ENCODE measurements at regions of chr10 and their contacts with region 1.

Region 1: DNA sequence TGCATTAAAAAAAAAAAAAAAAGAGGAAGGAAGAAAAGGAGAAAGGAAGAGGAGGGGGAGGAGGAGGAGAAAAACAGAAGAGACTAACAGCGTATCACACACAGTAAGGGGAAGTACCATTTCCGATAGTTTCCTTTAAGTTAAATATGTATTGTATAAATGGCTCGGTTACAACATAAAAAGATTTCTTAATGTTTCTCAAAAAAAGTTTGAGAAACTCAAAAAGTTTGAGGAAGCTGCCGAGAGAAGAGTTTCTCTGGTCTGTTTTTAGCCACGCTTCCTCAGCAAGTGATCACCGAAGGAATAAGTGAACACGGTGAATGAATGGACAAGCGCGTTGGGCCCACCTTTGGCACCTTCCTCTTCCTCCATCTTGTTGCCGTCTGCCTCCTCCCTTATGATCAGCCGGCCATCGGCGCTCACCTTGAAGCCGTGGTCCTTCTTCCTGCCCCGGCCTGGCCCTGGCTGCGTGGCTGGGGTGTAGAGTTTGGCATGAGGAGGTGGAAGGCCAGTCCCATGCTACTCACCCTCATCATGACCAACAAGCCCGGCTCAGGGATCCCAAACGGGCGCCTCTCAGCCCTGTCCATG is 31.3 kb upstream of the FRAT2 start:
- DNase-seq: peak; percentile 88 to 99 (median 95)
- H3K4me3 ChIP-seq: peak overlapping the region in 1 of 3 experiments; percentile 38
- H3K4me3 Mint-ChIP-seq: peak overlapping the region; percentile 30 to 54
- H3K27ac ChIP-seq: peak overlapping the region; percentile 91 to 100
- H3K27ac Mint-ChIP-seq: peak overlapping the region; percentile 96 to 99 (median 98)
- H3K4me1 ChIP-seq: peaks cover 96 to 100% of the 10 kb centered on the region in 2 donors
- H3K4me1 Mint-ChIP-seq: peaks cover 98% of the 10 kb centered on the region
- H3K27me3 ChIP-seq: no peaks in the 10 kb centered on the region
- H3K27me3 Mint-ChIP-seq: peaks cover under 1 to 3% (median 1%) of the 10 kb centered on the region in 3 donors
- CTCF ChIP-seq: no peak

Region 2: DNA sequence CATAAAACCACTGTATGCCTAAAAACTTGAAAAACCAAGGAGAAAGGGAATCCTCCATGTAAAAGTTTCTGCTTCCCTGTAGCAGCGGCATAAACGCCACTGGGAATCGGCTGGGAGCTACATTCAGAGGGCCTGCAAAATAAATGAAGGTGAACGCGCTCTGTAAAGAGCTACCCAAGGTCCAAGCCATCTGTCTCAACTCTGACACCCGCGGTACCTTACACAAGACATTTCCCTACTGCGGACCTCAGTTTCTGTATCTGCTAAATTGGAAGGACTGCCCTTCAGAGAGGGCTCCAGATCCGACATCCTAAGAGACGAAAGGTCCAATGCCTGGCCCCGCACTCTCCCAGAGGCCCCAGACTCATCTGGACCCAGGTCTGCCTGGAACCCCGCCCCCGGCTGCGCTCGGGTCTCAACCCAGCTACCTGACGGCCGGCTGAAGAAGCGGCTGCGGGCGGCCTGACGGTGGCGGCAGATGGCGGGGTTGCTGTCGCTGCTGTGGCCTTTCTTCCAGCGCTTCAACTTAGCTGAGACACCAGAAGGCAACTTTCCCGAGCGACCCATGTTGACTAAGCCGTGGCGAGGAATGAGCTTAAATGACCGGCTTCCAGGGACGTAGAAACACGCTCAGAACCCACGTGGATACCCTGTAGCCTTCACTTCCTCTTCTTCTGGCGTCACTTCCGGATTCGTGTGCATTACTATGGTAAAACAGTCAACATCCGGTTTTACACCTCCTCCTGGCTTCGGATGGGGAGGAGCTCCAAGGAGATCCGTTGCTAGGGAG is 35.0 kb after region 1 on chr10 and contains the start of gene RRP12:
- intact Hi-C with region 1: loop called in 1 of 2 experiments (anchors 5 kb)
- DNase-seq: peak; percentile 98 to 100 (median 99)
- H3K4me3 ChIP-seq: peak within 1 kb of the TSS; percentile 73 to 97 (median 85)
- H3K4me3 Mint-ChIP-seq: peak within 1 kb of the TSS; percentile 91 to 94
- H3K27ac ChIP-seq: peak within 1 kb of the TSS; percentile 87 to 98
- H3K27ac Mint-ChIP-seq: peak within 1 kb of the TSS; percentile 97 to 100 (median 98)
- H3K4me1 ChIP-seq: peaks cover 49 to 59% of the 10 kb centered on the region in 2 donors
- H3K4me1 Mint-ChIP-seq: peaks cover 36% of the 10 kb centered on the region
- H3K27me3 ChIP-seq: no peaks in the 10 kb centered on the region
- H3K27me3 Mint-ChIP-seq: peaks cover 0 to 2% (median 0%) of the 10 kb centered on the region in 3 donors
- CTCF ChIP-seq: no peak
- polyA plus RNA-seq, gene RRP12: 31.0 to 98.7 (median 44.3) TPM

Region 3: DNA sequence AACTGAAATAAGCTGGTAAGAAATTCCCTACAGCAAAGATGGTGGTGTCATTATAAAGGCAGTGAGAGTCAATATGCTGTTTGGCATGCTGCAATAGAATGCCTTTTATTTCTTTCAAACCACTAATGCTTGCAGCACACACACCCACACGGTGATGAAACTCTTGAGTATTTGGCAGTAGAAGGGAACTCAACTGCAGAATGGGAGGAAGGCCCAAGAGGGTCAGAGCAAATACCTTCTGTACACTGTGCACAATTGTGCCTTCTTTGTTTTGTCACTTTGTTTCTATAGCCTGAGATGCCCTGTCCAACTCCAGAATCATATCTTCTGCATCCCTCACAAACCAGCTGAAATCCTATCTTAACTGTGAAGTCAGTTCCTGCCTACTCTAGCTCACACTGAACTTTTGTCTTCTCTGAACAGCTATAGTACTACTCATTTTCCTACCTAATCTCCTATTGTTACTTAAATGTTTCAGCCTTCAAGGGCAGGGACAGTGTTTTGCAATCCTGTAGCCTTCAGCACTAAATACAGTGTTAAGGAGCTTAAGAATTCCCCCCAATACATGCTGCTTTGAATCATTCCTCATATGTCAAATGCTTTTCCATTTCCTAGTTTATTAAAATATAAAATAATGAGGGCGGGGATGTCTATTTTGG is 110.2 kb after region 1 on chr10:
- intact Hi-C with region 1: no loop called
- DNase-seq: no peak
- H3K4me3 ChIP-seq: no peak overlapping the region
- H3K4me3 Mint-ChIP-seq: no peak overlapping the region
- H3K27ac ChIP-seq: no peak overlapping the region
- H3K27ac Mint-ChIP-seq: no peak overlapping the region
- H3K4me1 ChIP-seq: no peaks in the 10 kb centered on the region
- H3K4me1 Mint-ChIP-seq: no peaks in the 10 kb centered on the region
- H3K27me3 ChIP-seq: no peaks in the 10 kb centered on the region
- H3K27me3 Mint-ChIP-seq: no peaks in the 10 kb centered on the region
- CTCF ChIP-seq: no peak

Region 4: GRCh38 chr10:98295907-98296306 is 930.1 kb after region 1 on chr10:
- intact Hi-C with region 1: no loop called
- DNase-seq: no peak
- H3K4me3 ChIP-seq: peak overlapping the region in 2 of 3 experiments; percentile 14 to 54
- H3K4me3 Mint-ChIP-seq: peak overlapping the region; percentile 72 to 82
- H3K27ac ChIP-seq: peak overlapping the region in 1 of 2 donors; percentile 60
- H3K27ac Mint-ChIP-seq: peak overlapping the region in 6 of 7 donors; percentile 16 to 83 (median 45)
- H3K4me1 ChIP-seq: peaks cover 12 to 13% of the 10 kb centered on the region in 2 donors
- H3K4me1 Mint-ChIP-seq: peaks cover 15% of the 10 kb centered on the region
- H3K27me3 ChIP-seq: peaks cover 2 to 8% of the 10 kb centered on the region in 2 donors
- H3K27me3 Mint-ChIP-seq: peaks cover 1 to 25% (median 23%) of the 10 kb centered on the region in 3 donors
- CTCF ChIP-seq: no peak

Measured in CD14-positive monocyte (primary cell).